AG04450 (cell line): ENCODE measurements at regions of chr19 and their contacts with region 1.

Region 1: DNA sequence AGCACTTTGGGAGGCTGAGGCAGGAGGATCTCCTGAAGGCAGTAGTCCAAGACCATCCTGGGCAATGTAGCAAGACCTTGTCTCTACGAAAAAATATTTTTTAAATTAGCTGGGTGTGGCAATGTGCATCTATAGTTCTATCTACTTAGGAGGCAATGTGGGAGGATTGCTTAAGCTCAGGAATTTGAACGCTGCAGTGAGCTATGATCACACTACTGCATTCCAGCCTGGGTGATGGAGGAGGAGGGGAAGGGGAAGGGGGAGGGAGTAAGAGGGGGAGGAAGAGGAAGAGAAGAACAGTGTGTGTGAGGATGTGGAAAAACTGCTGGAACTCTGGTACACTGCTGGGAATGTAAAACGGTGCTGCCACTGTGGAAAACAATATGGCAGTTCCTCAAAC is 9.2 kb upstream of the CLIP3 start:
- DNase-seq: peak; percentile 59
- H3K4me3 ChIP-seq: no peak overlapping the region
- H3K27ac ChIP-seq: peak overlapping the region; percentile 59
- H3K27me3 ChIP-seq: no peaks in the 10 kb centered on the region
- CTCF ChIP-seq: no peak

Region 2: DNA sequence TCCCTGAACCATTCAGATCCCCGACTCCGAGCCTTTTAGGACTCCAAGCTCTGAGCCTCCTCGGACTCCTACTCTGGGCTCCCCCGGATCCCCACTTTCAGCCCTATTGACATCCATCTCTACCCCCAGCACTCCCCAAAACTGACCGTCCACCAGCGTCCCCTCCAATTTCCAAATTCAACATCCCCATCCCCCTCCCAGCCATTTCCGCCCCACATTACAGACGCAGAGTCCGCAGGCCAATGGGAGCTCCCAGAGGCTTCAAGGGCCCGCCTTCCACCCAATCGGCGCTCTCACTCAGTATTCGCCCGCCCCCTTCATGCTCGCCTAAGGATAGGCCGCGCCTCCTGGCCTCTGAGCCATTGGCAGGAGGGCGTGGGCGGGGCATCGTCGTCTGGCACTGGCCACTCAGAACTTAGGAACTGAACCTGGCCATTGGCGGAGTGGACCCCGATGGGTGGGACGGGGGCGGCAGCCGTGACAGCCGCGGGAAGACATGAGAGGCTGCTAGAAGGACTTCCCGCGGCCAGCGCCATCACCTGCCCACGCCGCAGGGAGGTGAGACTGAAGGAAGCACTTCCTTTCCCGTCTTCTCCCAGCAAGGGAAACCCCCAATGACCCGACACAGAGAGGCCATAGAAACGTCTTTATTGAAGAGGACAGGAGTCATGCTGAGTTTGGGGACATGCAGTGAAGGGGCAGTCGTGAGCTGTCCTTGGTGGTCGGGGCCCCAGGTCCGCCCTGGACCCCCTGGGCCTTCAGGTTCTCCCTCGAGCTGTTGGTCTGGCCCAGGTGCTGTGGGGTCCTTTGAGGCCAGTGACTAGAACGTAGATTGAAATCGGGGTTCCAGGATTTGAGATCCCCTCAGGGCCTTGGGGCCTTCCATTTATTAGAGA is 27.6 kb before region 1 on chr19 and contains the start of gene ALKBH6:
- CTCF ChIA-PET with region 1: no interaction called
- POLR2A ChIA-PET with region 1: interaction called, 18 read pairs
- DNase-seq: peak; percentile 93
- H3K4me3 ChIP-seq: peak within 1 kb of the TSS; percentile 89
- H3K27ac ChIP-seq: peak within 1 kb of the TSS; percentile 2
- H3K27me3 ChIP-seq: no peaks in the 10 kb centered on the region
- CTCF ChIP-seq: no peak
- polyA plus RNA-seq, gene ALKBH6: 20.7 and 21.2 TPM in 2 replicates

Region 3: GRCh38 chr19:36060430-36060829 is 18.6 kb after region 1 on chr19:
- CTCF ChIA-PET with region 1: no interaction called
- POLR2A ChIA-PET with region 1: no interaction called
- DNase-seq: peak; percentile 29
- H3K4me3 ChIP-seq: no peak overlapping the region
- H3K27ac ChIP-seq: no peak overlapping the region
- H3K27me3 ChIP-seq: no peaks in the 10 kb centered on the region
- CTCF ChIP-seq: peak; percentile 80